IMR-90 (cell line): ENCODE measurements at regions of chr9 and their contacts with region 1.

Region 1: GRCh38 chr9:122609806-122610205 is 4.7 kb upstream of the OR1Q1 start:
- DNase-seq: no peak
- ATAC-seq: no peak
- H3K4me3 ChIP-seq: no peak overlapping the region
- H3K27ac ChIP-seq: no peak overlapping the region
- H3K4me1 ChIP-seq: no peaks in the 10 kb centered on the region
- H3K27me3 ChIP-seq: peaks cover 4% of the 10 kb centered on the region
- CTCF ChIP-seq: no peak
- POLR2A ChIP-seq: no peak
- RAD21 ChIP-seq: no peak

Region 2: DNA sequence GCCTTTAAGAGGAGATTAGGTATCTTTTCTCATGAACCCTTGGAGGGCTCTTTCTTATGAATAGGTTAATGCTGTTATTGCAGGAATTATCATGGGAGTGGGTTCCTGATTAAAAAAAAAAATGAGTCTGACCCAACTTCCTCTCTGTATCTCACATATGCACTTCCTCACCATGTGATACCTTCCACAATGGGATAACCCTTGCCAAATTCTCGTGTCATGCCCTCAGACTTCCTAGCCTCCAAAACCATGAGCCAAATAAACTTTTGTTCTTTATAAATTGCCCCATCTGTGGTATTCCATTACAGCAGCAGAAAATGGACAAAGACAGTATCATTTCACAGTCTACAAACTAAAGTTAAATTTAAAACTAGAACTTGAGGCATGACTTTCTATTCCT is 46.6 kb after region 1 on chr9:
- CTCF ChIA-PET with region 1: no interaction called
- POLR2A ChIA-PET with region 1: no interaction called
- dilution Hi-C with region 1: no loop called
- in situ Hi-C with region 1: no loop called
- intact Hi-C with region 1: loop called (anchors 5 kb)
- DNase-seq: no peak
- ATAC-seq: no peak
- H3K4me3 ChIP-seq: no peak overlapping the region
- H3K27ac ChIP-seq: no peak overlapping the region
- H3K4me1 ChIP-seq: no peaks in the 10 kb centered on the region
- H3K27me3 ChIP-seq: no peaks in the 10 kb centered on the region
- CTCF ChIP-seq: no peak
- POLR2A ChIP-seq: no peak
- RAD21 ChIP-seq: no peak